ENCODE measurements at regions of chr12 and their contacts with region 1.

Region 1: GRCh38 chr12:104680066-104680465 is 223.3 kb downstream of the CHST11 start:
- DNase-seq: peak; percentile 70
- H3K4me3 Mint-ChIP-seq: no peak overlapping the region
- H3K27ac Mint-ChIP-seq: peak overlapping the region; percentile 25
- H3K4me1 Mint-ChIP-seq: peaks cover 44% of the 10 kb centered on the region
- H3K27me3 Mint-ChIP-seq: no peaks in the 10 kb centered on the region

Region 2: GRCh38 chr12:104381731-104382480 is 298.2 kb before region 1 on chr12:
- CTCF ChIA-PET with region 1: interaction called, 5 read pairs
- intact Hi-C with region 1: loop called (anchors 1 kb)
- DNase-seq: peak; percentile 91
- H3K4me3 Mint-ChIP-seq: no peak overlapping the region
- H3K27ac Mint-ChIP-seq: no peak overlapping the region
- H3K4me1 Mint-ChIP-seq: peaks cover 10% of the 10 kb centered on the region
- H3K27me3 Mint-ChIP-seq: no peaks in the 10 kb centered on the region

Region 3: DNA sequence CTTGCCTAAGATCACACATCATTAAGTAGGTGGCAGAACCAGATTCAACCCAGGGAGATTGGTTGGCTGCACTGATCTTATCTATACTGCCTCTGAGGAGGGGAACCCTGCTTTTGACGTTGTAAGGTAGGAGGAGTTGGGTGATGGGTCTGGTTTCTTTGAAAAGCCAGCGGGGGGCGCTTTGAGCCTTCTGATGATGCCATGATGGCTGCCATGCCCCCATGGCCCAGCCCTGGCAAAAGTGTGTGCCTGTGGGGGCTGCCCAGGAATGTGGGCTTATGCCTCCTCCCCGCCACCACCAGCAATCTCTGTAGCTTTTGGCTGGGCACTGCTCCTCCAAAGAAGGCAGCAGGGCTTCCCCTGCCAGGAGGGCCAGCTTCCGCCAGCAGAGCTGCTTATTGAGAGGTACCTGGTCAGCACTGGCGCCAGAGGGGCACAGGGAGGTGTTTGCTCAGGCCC is 53.7 kb after region 1 on chr12:
- CTCF ChIA-PET with region 1: no interaction called
- intact Hi-C with region 1: loop called (anchors 1 kb)
- DNase-seq: peak; percentile 61
- H3K4me3 Mint-ChIP-seq: no peak overlapping the region
- H3K27ac Mint-ChIP-seq: no peak overlapping the region
- H3K4me1 Mint-ChIP-seq: peaks cover 41% of the 10 kb centered on the region
- H3K27me3 Mint-ChIP-seq: no peaks in the 10 kb centered on the region

Region 4: DNA sequence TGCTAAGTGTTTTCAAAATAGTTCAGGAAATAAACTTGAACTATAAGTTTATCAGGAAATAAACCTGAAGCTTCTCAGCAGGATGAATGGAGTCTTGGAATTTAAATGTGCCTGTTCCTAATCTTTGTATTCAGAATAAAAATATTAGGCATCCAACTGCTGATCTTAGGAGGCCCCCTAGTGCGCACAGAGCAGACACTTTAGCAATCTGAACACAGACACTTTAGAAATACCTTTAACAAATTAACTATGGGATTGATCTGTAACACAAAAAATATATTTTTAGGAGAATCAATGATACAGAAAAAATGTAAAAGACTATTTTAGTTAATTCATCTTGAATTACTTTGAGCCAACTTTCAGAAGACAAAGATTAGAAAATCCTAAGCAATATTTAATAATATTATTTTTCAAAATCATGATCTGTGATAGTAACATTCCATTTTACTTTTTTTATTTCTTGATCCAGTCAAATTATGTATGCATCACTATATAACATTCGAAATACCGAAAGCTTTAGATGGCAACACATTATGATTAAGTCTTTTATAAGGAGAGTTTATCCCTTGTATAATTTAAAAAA is 197.1 kb after region 1 on chr12:
- CTCF ChIA-PET with region 1: no interaction called
- intact Hi-C with region 1: loop called (anchors 1 kb)
- DNase-seq: peak; percentile 59
- H3K4me3 Mint-ChIP-seq: no peak overlapping the region
- H3K27ac Mint-ChIP-seq: no peak overlapping the region
- H3K4me1 Mint-ChIP-seq: peaks cover 3% of the 10 kb centered on the region
- H3K27me3 Mint-ChIP-seq: peaks cover 2% of the 10 kb centered on the region

Region 5: DNA sequence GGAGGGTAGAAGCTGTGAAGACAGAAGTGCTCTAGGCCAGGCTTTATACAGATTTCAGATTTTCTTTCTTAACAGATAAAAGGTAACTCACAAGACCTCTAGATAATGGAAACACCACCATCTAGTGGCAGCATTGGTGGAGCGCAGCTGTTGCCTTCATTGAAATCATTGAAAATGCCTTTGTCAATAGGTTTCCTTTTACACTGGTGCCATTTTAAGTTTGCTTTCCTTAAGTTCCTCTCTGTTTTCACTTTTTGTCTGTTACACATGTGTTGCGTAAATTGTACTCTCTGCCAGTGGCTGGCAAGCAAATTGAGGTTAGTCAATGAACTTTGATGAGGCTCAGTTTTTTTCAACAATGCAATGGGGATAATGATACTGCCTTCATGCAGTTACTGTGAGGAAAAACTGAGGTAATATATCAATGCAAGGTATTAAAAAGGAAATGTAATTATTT is 373.1 kb after region 1 on chr12:
- CTCF ChIA-PET with region 1: no interaction called
- intact Hi-C with region 1: loop called (anchors 1 kb)
- DNase-seq: peak; percentile 89
- H3K4me3 Mint-ChIP-seq: no peak overlapping the region
- H3K27ac Mint-ChIP-seq: no peak overlapping the region
- H3K4me1 Mint-ChIP-seq: no peaks in the 10 kb centered on the region
- H3K27me3 Mint-ChIP-seq: no peaks in the 10 kb centered on the region

Region 6: GRCh38 chr12:106302401-106303201 is 1622.5 kb after region 1 on chr12 and contains the start of gene TCP11L2:
- CTCF ChIA-PET with region 1: no interaction called
- intact Hi-C with region 1: loop called (anchors 10 kb)
- DNase-seq: peak; percentile 88
- H3K4me3 Mint-ChIP-seq: peak within 1 kb of the TSS; percentile 93
- H3K27ac Mint-ChIP-seq: peak within 1 kb of the TSS; percentile 99
- H3K4me1 Mint-ChIP-seq: peaks cover 55% of the 10 kb centered on the region
- H3K27me3 Mint-ChIP-seq: no peaks in the 10 kb centered on the region
- total RNA-seq, gene TCP11L2: 9.2 to 10.3 TPM